Caco-2 (cell line): ENCODE measurements at regions of chr12 and their contacts with region 1.

Region 1: GRCh38 chr12:88141770-88142609 is at the starts of genes CEP290 and TMTC3:
- DNase-seq: peak; percentile 96 to 99
- H3K4me3 ChIP-seq: peak within 1 kb of the TSS; percentile 86
- H3K4me3 Mint-ChIP-seq: peak within 1 kb of the TSS; percentile 86
- H3K27ac Mint-ChIP-seq: peak within 1 kb of the TSS; percentile 68
- H3K4me1 ChIP-seq: peaks cover 30% of the 10 kb centered on the region
- H3K4me1 Mint-ChIP-seq: peaks cover 17% of the 10 kb centered on the region
- H3K27me3 ChIP-seq: no peaks in the 10 kb centered on the region
- H3K27me3 Mint-ChIP-seq: no peaks in the 10 kb centered on the region
- CTCF ChIP-seq: no peak
- total RNA-seq, gene CEP290: 14.0 and 16.2 TPM in 2 replicates
- total RNA-seq, gene TMTC3: 31.8 and 31.9 TPM in 2 replicates

Region 2: DNA sequence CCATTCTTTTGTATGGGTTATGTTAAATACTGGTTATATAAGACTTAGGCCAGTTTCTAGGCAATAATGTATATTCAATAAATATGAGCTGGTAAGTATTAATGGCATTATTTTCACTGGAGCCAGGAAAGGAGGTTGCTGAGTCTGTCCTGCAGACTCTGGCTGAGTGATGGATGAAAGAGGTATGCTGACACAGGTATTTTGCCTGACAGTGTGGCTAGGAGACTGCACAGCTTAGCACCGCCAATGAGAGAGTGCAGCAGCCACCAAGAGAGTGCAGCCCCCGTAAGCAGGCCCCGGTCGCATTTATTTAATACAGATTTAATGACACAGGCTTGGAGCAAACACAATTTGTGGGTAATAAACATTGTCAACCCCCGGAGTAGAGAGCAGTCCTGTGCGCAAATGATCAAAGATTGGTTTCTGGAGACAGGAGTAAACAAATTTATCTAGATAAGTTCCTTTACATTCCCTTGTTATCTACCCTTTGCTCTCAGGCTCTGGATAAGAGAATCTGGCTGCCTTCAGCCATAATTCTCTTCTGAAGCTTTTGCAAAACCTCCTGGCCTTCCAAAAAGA is 37.5 kb after region 1 on chr12:
- CTCF ChIA-PET with region 1: no interaction called
- POLR2A ChIA-PET with region 1: no interaction called
- intact Hi-C with region 1: loop called (anchors 1 kb)
- DNase-seq: peak; percentile 50 to 51
- H3K4me3 ChIP-seq: no peak overlapping the region
- H3K4me3 Mint-ChIP-seq: peak overlapping the region; percentile 37
- H3K27ac Mint-ChIP-seq: peak overlapping the region; percentile 77
- H3K4me1 ChIP-seq: peaks cover 69% of the 10 kb centered on the region
- H3K4me1 Mint-ChIP-seq: peaks cover 54% of the 10 kb centered on the region
- H3K27me3 ChIP-seq: no peaks in the 10 kb centered on the region
- H3K27me3 Mint-ChIP-seq: no peaks in the 10 kb centered on the region
- CTCF ChIP-seq: no peak

Region 3: GRCh38 chr12:88310069-88310468 is 168.1 kb after region 1 on chr12:
- CTCF ChIA-PET with region 1: no interaction called
- POLR2A ChIA-PET with region 1: no interaction called
- intact Hi-C with region 1: no loop called
- DNase-seq: no peak
- H3K4me3 ChIP-seq: no peak overlapping the region
- H3K4me3 Mint-ChIP-seq: no peak overlapping the region
- H3K27ac Mint-ChIP-seq: no peak overlapping the region
- H3K4me1 ChIP-seq: peaks cover 26% of the 10 kb centered on the region
- H3K4me1 Mint-ChIP-seq: peaks cover 15% of the 10 kb centered on the region
- H3K27me3 ChIP-seq: no peaks in the 10 kb centered on the region
- H3K27me3 Mint-ChIP-seq: peaks cover 8% of the 10 kb centered on the region
- CTCF ChIP-seq: no peak

Region 4: DNA sequence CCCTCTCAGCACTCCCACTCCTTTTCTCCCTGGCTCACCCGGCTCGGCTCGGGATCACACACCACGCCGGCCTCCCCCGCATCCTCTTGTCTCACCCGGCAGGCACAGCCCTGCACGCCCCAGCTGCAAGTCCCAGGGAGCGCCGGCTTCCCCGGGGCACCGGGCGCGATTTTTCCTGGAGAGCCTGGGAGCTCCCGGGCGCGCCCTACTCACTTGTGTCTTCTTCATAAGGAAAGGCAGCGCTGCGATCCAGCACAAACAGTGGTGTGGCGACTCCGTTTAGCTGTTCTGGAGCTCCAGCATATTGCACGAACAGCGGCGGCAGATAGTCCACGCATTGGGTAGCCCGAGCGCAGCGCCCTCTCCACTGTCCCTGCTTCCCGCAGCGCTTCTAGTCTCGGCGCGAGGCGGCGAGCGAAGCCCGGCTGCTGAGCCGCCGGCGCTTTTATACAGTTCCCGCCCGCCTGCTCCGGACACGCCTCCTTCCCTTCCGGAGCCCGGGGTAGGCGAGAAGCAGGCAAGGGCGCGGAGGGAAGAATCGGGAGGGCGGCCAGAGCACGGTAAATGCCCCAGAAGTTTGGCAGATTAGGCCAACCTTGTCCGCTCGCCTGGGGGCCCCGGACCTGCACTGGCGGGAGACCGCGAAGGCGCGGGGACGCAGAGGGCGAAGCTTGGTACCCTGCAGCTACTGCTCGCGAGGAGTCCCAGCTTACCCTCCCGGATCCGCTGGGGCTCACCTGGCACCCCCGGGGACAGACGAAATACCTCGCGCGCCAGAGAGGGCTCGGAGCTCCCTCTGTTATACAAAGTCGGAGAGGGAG is 438.3 kb after region 1 on chr12 and contains the start of gene KITLG:
- CTCF ChIA-PET with region 1: no interaction called
- POLR2A ChIA-PET with region 1: interaction called, 3 read pairs
- intact Hi-C with region 1: loop called (anchors 10 kb)
- DNase-seq: peak; percentile 90 to 94
- H3K4me3 ChIP-seq: peak within 1 kb of the TSS; percentile 74
- H3K4me3 Mint-ChIP-seq: peak within 1 kb of the TSS; percentile 86
- H3K27ac Mint-ChIP-seq: peak within 1 kb of the TSS; percentile 87
- H3K4me1 ChIP-seq: peaks cover 14% of the 10 kb centered on the region
- H3K4me1 Mint-ChIP-seq: no peaks in the 10 kb centered on the region
- H3K27me3 ChIP-seq: no peaks in the 10 kb centered on the region
- H3K27me3 Mint-ChIP-seq: no peaks in the 10 kb centered on the region
- CTCF ChIP-seq: peak in 1 of 2 experiments; percentile 43
- total RNA-seq, gene KITLG: 200 and 211 TPM in 2 replicates